PC-9 (cell line): ENCODE measurements at regions of chr9 and their contacts with region 1.

Region 1: DNA sequence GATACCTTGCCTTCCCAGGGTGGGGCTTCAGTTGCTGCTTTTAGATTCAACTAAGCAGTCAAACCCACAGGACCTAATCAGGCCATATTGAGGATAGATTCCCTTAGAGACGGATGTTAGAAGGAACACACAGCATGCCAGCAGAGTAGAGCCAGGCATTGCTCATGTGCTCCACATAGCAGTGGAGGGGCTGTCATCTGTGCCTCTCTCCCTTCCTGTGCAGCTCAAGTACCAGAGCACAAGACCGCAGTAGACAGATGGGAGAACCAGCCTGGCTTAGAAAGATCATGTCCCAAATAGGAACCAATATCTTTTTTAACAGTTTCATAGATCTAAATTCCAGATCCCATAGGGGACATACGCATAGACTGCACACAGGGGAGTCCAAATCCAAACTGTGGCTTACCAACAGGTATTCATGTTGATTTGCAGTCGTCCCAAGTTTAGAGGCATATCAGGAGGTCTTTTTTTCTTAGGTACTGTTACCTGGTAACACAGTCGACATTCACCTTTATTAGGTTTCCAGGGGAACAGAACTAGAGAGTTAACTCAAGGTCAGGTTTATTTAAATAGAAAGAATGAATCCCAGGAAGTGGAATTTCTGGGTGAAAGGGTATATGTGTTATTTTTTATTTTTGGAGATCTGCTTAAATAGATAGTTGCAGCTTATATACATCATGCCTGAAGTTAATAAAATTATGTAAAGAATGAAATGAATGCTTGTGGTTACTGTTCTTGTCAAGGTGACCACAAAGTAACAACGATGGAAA is 43.6 kb upstream of the PCAT7 start:
- DNase-seq: peak in 1 of 2 experiments; percentile 49
- H3K4me3 ChIP-seq: no peak overlapping the region
- H3K27ac ChIP-seq: peak overlapping the region; percentile 29; the same call in 1 of the 2 replicates
- H3K4me1 ChIP-seq: peaks cover 14% of the 10 kb centered on the region
- H3K27me3 ChIP-seq: no peaks in the 10 kb centered on the region
- CTCF ChIP-seq: no peak

Region 2: DNA sequence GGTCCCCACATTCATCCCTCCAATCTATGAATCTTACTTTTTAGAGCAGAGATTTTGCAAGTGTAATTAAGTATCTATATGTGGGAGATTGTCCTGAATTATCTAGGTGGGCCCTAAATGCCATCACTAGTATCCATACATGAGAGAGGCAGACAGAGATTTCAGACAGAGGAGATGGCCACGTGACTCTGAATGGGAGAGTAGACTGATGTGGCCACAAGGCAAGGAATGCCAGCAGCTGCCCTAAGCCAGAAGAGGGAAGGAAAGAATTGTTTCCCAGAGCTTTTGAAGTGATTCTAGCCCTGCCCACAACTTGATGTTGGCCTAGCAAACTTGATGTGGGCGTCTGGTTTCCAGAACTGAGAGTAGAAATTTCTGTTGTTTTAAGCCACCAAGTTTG is 46.5 kb before region 1 on chr9:
- CTCF ChIA-PET with region 1: no interaction called
- POLR2A ChIA-PET with region 1: interaction called, 42 read pairs
- intact Hi-C with region 1: no loop called
- DNase-seq: no peak
- H3K4me3 ChIP-seq: no peak overlapping the region
- H3K27ac ChIP-seq: no peak overlapping the region
- H3K4me1 ChIP-seq: no peaks in the 10 kb centered on the region
- H3K27me3 ChIP-seq: no peaks in the 10 kb centered on the region
- CTCF ChIP-seq: no peak

Region 3: DNA sequence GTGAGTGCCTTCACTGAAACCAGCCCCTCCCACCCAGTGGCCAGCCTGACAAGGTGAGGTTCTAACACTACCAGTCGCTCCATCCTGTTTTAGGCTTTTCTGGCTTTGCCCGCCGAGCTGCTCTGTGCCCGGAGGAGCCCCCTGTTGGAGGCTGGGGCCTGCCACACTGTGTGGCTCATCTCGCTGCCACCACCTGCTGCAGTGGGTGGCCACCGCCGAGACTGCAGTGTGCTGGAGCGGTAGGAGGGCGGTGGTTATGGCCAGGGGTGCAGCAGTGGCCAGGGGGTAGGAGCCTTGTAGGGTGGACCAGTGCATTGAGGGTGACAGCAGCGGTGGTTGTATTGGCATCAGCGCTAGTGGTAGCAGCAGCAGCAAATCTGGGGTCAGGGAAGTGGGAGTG is 31.1 kb before region 1 on chr9:
- CTCF ChIA-PET with region 1: no interaction called
- POLR2A ChIA-PET with region 1: no interaction called
- intact Hi-C with region 1: no loop called
- DNase-seq: no peak
- H3K4me3 ChIP-seq: no peak overlapping the region
- H3K27ac ChIP-seq: no peak overlapping the region
- H3K4me1 ChIP-seq: no peaks in the 10 kb centered on the region
- H3K27me3 ChIP-seq: no peaks in the 10 kb centered on the region
- CTCF ChIP-seq: no peak

Region 4: DNA sequence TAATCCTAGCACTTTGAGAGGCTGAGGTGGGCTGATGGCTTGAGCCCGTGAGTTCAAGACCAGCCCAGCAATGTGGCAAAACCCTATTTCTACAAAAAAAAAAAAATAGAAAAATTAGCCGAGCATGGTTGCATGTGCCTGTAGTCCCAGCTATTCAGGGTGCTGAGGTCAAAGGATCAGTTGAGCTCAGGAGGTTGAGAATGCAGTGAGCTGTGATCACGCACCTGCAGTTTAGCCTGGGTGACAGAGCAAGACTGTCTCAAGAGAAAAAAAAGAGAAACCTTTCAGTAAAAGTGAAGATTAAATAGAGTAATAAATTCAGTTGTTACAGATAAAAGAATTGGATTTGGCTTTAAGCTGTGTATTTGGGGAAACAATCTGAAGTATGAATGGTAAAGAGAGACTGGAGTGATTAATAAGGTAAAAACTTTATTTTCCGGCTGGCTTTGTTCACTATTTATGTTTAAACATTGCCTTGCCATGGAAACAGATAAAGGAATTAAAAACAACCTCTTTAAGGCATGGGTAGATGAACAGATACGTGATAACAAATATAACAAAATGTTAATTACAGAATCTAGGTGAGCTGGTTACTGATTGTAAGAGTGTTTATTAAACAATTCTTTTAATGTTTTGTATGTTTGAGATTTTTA is 12.4 kb before region 1 on chr9:
- CTCF ChIA-PET with region 1: no interaction called
- POLR2A ChIA-PET with region 1: no interaction called
- intact Hi-C with region 1: no loop called
- DNase-seq: no peak
- H3K4me3 ChIP-seq: no peak overlapping the region
- H3K27ac ChIP-seq: no peak overlapping the region
- H3K4me1 ChIP-seq: no peaks in the 10 kb centered on the region
- H3K27me3 ChIP-seq: no peaks in the 10 kb centered on the region
- CTCF ChIP-seq: no peak